ENCODE measurements at regions of chr11 and their contacts with region 1.

Region 1: DNA sequence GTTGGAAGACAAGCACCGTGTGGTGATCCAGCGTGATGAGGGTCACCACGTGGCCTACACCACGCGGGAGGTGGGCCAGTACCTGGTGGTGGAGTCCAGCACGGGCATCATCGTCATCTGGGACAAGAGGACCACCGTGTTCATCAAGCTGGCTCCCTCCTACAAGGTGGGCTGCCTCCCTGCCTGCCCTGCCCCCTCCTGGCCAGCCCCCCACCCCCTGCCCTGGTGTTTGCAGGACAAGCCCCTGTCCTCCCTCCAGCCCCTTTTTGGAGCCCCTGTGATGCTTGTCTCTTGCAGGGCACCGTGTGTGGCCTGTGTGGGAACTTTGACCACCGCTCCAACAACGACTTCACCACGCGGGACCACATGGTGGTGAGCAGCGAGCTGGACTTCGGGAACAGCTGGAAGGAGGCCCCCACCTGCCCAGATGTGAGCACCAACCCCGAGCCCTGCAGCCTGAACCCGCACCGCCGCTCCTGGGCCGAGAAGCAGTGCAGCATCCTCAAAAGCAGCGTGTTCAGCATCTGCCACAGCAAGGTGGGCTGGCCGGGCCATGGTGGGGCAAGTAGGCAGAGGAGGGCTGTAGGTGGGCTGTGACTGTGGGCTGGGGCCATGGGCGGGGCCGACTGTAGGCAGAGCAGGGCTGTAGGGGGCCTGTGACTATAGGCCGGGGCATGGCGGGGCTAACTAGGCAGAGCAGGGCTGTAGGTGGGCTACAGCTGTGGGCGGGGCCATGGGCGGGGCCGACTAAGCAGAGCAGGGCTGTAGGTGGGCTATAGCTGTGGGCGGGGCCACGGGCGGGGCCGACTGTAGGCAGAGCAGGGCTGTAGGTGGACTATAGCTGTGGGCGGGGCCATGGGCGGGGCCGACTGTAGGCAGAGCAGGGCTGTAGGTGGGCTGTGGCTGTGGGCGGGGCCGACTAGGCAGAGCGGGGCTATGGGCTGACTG is 13.6 kb downstream of the MUC2 start:
- DNase-seq: no peak
- H3K4me3 ChIP-seq: no peak overlapping the region
- H3K27ac ChIP-seq: no peak overlapping the region
- H3K4me1 ChIP-seq: no peaks in the 10 kb centered on the region
- H3K27me3 ChIP-seq: no peaks in the 10 kb centered on the region
- CTCF ChIP-seq: no peak
- POLR2A ChIP-seq: no peak

Region 2: GRCh38 chr11:645536-645935 is 442.7 kb before region 1 on chr11:
- intact Hi-C with region 1: no loop called
- DNase-seq: no peak
- H3K4me3 ChIP-seq: no peak overlapping the region
- H3K27ac ChIP-seq: no peak overlapping the region
- H3K4me1 ChIP-seq: no peaks in the 10 kb centered on the region
- H3K27me3 ChIP-seq: no peaks in the 10 kb centered on the region
- CTCF ChIP-seq: no peak
- POLR2A ChIP-seq: no peak

Region 3: GRCh38 chr11:910589-911195 is 177.5 kb before region 1 on chr11 and contains the start of gene CHID1:
- intact Hi-C with region 1: no loop called
- DNase-seq: no peak
- H3K4me3 ChIP-seq: peak within 1 kb of the TSS; percentile 91
- H3K27ac ChIP-seq: peak within 1 kb of the TSS; percentile 90
- H3K4me1 ChIP-seq: peaks cover 29% of the 10 kb centered on the region
- H3K27me3 ChIP-seq: no peaks in the 10 kb centered on the region
- CTCF ChIP-seq: no peak
- POLR2A ChIP-seq: peak in 1 of 2 donors; percentile 10
- total RNA-seq, gene CHID1: 72.9 TPM

Region 4: DNA sequence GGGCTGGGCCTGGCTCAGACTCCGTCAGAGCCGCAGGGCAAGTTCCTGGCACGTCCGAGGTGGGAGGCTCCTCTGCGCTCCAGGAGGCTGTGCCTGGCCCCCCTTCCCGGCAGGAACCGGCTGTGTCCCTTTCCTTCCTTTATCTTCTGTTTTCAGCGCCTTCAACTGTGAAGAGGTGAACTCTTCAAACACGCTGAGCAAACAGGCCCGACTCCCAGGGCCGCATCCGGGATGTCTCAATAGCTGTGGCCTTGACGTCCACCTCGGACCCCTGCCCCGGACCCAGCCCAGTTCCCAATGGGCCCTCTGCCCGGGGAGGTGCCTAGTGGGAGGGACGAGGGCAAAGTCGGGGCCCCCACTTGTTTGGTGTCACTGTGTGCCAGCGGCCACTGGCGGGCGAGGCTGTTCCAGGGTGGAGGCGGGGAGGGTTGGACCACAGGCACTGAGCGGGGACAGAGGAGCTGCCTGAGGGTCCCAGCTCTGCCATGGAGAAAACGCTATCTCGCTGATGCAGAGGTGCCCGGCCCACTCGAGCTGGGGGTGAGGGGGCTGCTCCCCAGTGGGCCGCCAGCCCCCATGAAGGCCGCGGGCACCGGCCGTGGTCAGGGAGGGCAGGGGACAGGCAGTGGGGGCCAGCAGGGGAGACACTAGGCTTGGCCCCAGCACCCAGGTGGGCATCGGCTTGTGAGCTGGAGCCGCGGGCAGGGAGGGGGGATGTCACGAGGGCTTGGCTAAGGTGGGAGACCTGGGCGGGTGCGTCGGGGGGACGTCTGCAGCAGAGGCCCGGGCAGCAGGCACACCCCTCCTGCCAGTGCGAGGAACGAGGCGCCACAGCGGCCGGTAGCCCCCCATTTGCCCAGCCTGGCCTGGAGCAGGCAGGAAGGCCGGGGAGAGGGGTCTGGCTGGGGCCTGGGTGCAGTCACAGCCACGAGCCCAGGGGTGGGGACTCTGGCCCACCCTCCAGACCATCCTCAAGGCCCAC is 131.9 kb after region 1 on chr11:
- intact Hi-C with region 1: loop called (anchors 1 kb)
- DNase-seq: no peak
- H3K4me3 ChIP-seq: no peak overlapping the region
- H3K27ac ChIP-seq: no peak overlapping the region
- H3K4me1 ChIP-seq: no peaks in the 10 kb centered on the region
- H3K27me3 ChIP-seq: no peaks in the 10 kb centered on the region
- CTCF ChIP-seq: no peak
- POLR2A ChIP-seq: no peak

Region 5: DNA sequence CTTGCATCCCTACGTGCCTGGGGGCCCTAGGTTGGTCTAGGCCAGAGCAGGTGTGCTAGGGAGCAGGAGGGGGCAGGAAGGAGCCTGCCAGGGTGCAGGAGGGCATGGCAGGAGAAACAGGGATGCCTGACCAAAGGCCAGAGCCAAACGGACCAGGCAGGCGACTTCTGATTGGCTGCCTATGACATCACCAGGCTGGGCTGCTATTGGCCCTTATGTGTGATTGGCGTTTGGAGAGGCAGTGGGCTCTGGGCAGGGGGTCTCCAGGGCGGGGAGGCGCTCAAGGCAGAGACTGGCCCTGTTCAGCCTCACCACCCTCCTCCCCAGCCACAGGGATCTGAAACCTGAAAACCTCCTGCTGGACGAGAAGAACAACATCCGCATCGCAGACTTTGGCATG is 353.9 kb after region 1 on chr11:
- intact Hi-C with region 1: loop called (anchors 10 kb)
- DNase-seq: no peak
- H3K4me3 ChIP-seq: no peak overlapping the region
- H3K27ac ChIP-seq: no peak overlapping the region
- H3K4me1 ChIP-seq: no peaks in the 10 kb centered on the region
- H3K27me3 ChIP-seq: no peaks in the 10 kb centered on the region
- CTCF ChIP-seq: no peak
- POLR2A ChIP-seq: no peak

Measured in vagina (tissue), 2 donors.